CD8-positive, alpha-beta T cell (primary cell): ENCODE measurements at regions of chr2 and their contacts with region 1.

Region 1: DNA sequence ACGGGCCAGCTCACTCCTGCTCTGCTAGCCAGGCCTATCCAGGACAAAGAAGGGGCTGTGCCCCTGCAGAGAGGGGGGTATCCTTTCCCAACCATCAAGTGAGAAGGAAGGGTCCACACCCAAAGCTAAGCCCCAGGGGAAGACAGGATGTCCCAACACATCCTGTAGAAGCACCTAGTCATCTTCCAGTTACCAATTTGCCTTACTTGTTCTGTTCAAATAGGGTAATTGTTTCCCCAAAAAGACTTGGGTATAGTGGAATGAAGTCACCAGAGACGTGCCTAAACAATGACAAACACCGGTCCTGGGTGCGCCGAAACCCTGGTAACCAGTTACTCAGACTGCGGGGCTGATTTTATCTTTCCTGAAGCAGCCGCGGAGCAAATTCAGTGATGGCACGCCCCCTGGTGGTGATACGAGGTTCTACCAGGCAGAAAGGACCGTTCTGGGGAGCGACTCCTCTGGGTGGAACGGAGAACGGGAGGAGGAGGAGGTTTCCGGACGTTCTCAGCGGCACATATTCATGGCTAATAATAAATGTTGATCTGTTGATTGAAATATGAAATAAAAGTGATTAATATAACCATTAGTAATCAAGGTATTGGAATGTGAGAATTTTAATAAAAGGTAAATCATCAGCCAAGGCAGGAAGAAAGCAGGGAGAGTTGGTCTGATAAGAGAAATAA is 109.3 kb upstream of the STON1 start:
- DNase-seq: peak; percentile 82 to 97 (median 90)
- ATAC-seq: peak; percentile 89
- H3K4me3 ChIP-seq: no peak overlapping the region
- H3K4me3 Mint-ChIP-seq: peak overlapping the region; percentile 40
- H3K27ac ChIP-seq: no peak overlapping the region
- H3K27ac Mint-ChIP-seq: peak overlapping the region; percentile 3
- H3K4me1 ChIP-seq: peaks cover 21% of the 10 kb centered on the region
- H3K4me1 Mint-ChIP-seq: peaks cover 35% of the 10 kb centered on the region
- H3K27me3 ChIP-seq: no peaks in the 10 kb centered on the region
- H3K27me3 Mint-ChIP-seq: no peaks in the 10 kb centered on the region
- CTCF ChIP-seq: peak; percentile 99

Region 2: GRCh38 chr2:47849368-47849767 is 571.3 kb before region 1 on chr2:
- CTCF ChIA-PET with region 1: no interaction called
- POLR2A ChIA-PET with region 1: no interaction called
- intact Hi-C with region 1: loop called in 1 of 2 experiments (anchors 1 kb)
- DNase-seq: no peak
- ATAC-seq: no peak
- H3K4me3 ChIP-seq: no peak overlapping the region
- H3K4me3 Mint-ChIP-seq: no peak overlapping the region
- H3K27ac ChIP-seq: no peak overlapping the region
- H3K27ac Mint-ChIP-seq: no peak overlapping the region
- H3K4me1 ChIP-seq: peaks cover 12% of the 10 kb centered on the region
- H3K4me1 Mint-ChIP-seq: peaks cover 65% of the 10 kb centered on the region
- H3K27me3 ChIP-seq: no peaks in the 10 kb centered on the region
- H3K27me3 Mint-ChIP-seq: no peaks in the 10 kb centered on the region
- CTCF ChIP-seq: no peak

Region 3: GRCh38 chr2:48107326-48107925 is 313.2 kb before region 1 on chr2:
- CTCF ChIA-PET with region 1: interaction called, 38 read pairs
- POLR2A ChIA-PET with region 1: no interaction called
- intact Hi-C with region 1: no loop called
- DNase-seq: no peak
- ATAC-seq: no peak
- H3K4me3 ChIP-seq: no peak overlapping the region
- H3K4me3 Mint-ChIP-seq: no peak overlapping the region
- H3K27ac ChIP-seq: no peak overlapping the region
- H3K27ac Mint-ChIP-seq: no peak overlapping the region
- H3K4me1 ChIP-seq: peaks cover 11% of the 10 kb centered on the region
- H3K4me1 Mint-ChIP-seq: peaks cover 17% of the 10 kb centered on the region
- H3K27me3 ChIP-seq: peaks cover 0 to 4% of the 10 kb centered on the region in 2 experiments
- H3K27me3 Mint-ChIP-seq: no peaks in the 10 kb centered on the region
- CTCF ChIP-seq: no peak

Region 4: GRCh38 chr2:48205137-48205798 is 215.4 kb before region 1 on chr2:
- CTCF ChIA-PET with region 1: no interaction called
- POLR2A ChIA-PET with region 1: no interaction called
- intact Hi-C with region 1: loop called in 1 of 2 experiments (anchors 10 kb)
- DNase-seq: no peak
- ATAC-seq: no peak
- H3K4me3 ChIP-seq: no peak overlapping the region
- H3K4me3 Mint-ChIP-seq: no peak overlapping the region
- H3K27ac ChIP-seq: no peak overlapping the region
- H3K27ac Mint-ChIP-seq: no peak overlapping the region
- H3K4me1 ChIP-seq: no peaks in the 10 kb centered on the region
- H3K4me1 Mint-ChIP-seq: peaks cover 3% of the 10 kb centered on the region
- H3K27me3 ChIP-seq: no peaks in the 10 kb centered on the region
- H3K27me3 Mint-ChIP-seq: no peaks in the 10 kb centered on the region
- CTCF ChIP-seq: no peak

Region 5: GRCh38 chr2:48356701-48357325 is 63.8 kb before region 1 on chr2:
- CTCF ChIA-PET with region 1: no interaction called
- POLR2A ChIA-PET with region 1: interaction called, 3 read pairs
- intact Hi-C with region 1: loop called in 1 of 2 experiments (anchors 5 kb)
- DNase-seq: peak in 4 of 9 experiments; percentile 28 to 81 (median 54)
- ATAC-seq: peak; percentile 88
- H3K4me3 ChIP-seq: peak overlapping the region in 1 of 2 experiments; percentile 6
- H3K4me3 Mint-ChIP-seq: peak overlapping the region; percentile 62
- H3K27ac ChIP-seq: peak overlapping the region; percentile 64 to 74
- H3K27ac Mint-ChIP-seq: peak overlapping the region; percentile 94
- H3K4me1 ChIP-seq: peaks cover 47% of the 10 kb centered on the region
- H3K4me1 Mint-ChIP-seq: peaks cover 73% of the 10 kb centered on the region
- H3K27me3 ChIP-seq: no peaks in the 10 kb centered on the region
- H3K27me3 Mint-ChIP-seq: no peaks in the 10 kb centered on the region
- CTCF ChIP-seq: no peak